Naive thymus-derived CD8-positive, alpha-beta T cell (primary cell): ENCODE measurements at regions of chr11 and their contacts with region 1.

Region 1: GRCh38 chr11:61049859-61050258 is 52.4 kb upstream of the CD5 start:
- DNase-seq: no peak
- ATAC-seq: no peak
- H3K4me3 Mint-ChIP-seq: peak overlapping the region in 3 of 10 donors; percentile 27 to 50 (median 30)
- H3K27ac Mint-ChIP-seq: peak overlapping the region in 6 of 10 donors; percentile 47 to 76 (median 56)
- H3K4me1 Mint-ChIP-seq: peaks cover 27 to 49% (median 45%) of the 10 kb centered on the region in 4 donors
- H3K27me3 Mint-ChIP-seq: no peaks in the 10 kb centered on the region

Region 2: GRCh38 chr11:60970369-60970774 is 79.5 kb before region 1 on chr11:
- POLR2A ChIA-PET with region 1: interaction called, 11 read pairs
- DNase-seq: peak; percentile 73 to 90 (median 82)
- ATAC-seq: peak; percentile 52 to 57
- H3K4me3 Mint-ChIP-seq: peak overlapping the region; percentile 91 to 100 (median 95)
- H3K27ac Mint-ChIP-seq: peak overlapping the region; percentile 82 to 99 (median 96)
- H3K4me1 Mint-ChIP-seq: peaks cover 24 to 40% (median 32%) of the 10 kb centered on the region in 4 donors
- H3K27me3 Mint-ChIP-seq: no peaks in the 10 kb centered on the region

Region 3: DNA sequence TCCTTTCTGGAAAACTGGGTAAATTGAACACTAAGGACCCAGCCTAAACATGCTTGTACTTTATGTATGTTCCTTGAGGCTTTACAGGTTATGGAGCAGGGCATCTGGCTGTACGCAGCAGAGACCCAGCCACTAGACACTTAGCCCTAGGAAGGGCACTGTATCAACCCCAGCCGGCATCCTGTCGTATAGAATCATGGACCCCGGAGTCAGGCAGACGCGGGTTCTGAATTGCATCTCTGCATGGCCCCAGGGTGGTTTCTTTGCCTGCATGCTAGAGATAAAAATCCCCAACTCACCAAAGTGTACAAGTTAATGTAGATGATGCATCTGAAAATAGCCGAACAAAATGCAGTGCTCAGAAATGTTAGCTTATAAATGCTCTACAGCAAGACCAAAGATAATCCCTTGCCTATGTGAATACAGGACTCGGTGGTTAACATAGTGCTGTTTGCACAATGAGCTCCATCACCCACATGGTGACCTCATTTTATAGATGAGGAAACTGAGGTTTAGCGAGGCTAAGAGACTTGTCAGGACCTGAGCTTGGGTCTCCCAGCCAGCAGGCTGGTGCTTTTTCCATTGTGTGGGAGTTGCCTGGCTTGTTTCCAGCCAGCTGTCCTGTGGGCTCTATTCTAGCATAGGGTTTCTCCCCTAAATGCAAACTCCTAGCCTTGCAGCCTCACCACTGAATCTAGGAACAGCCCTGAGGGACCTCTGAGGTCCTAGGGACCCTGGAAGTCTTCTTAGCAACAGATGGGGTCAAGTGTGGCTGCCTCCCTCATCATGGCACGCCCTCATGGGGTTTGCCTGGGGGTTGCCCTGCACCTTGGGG is 71.1 kb before region 1 on chr11:
- POLR2A ChIA-PET with region 1: interaction called, 12 read pairs
- DNase-seq: peak in 1 of 10 donors; percentile 40
- ATAC-seq: peak; percentile 39 to 45
- H3K4me3 Mint-ChIP-seq: peak overlapping the region; percentile 57 to 95 (median 81)
- H3K27ac Mint-ChIP-seq: peak overlapping the region; percentile 81 to 99 (median 94)
- H3K4me1 Mint-ChIP-seq: peaks cover 36 to 93% (median 89%) of the 10 kb centered on the region in 4 donors
- H3K27me3 Mint-ChIP-seq: no peaks in the 10 kb centered on the region

Region 4: GRCh38 chr11:61021661-61022212 is 28.1 kb before region 1 on chr11:
- POLR2A ChIA-PET with region 1: interaction called, 10 read pairs
- DNase-seq: peak; percentile 72 to 97 (median 93)
- ATAC-seq: peak; percentile 60 to 81
- H3K4me3 Mint-ChIP-seq: peak overlapping the region; percentile 68 to 86 (median 76)
- H3K27ac Mint-ChIP-seq: peak overlapping the region; percentile 89 to 100 (median 98)
- H3K4me1 Mint-ChIP-seq: peaks cover 44 to 85% (median 72%) of the 10 kb centered on the region in 4 donors
- H3K27me3 Mint-ChIP-seq: no peaks in the 10 kb centered on the region

Region 5: GRCh38 chr11:61071208-61071681 is 21.4 kb after region 1 on chr11:
- POLR2A ChIA-PET with region 1: interaction called, 10 read pairs
- DNase-seq: peak in 8 of 10 donors; percentile 45 to 81 (median 69)
- ATAC-seq: peak; percentile 97 to 99
- H3K4me3 Mint-ChIP-seq: peak overlapping the region; percentile 64 to 87 (median 78)
- H3K27ac Mint-ChIP-seq: peak overlapping the region; percentile 90 to 98 (median 96)
- H3K4me1 Mint-ChIP-seq: peaks cover 38 to 88% (median 85%) of the 10 kb centered on the region in 4 donors
- H3K27me3 Mint-ChIP-seq: no peaks in the 10 kb centered on the region